ENCODE measurements at regions of chr18 and their contacts with region 1.

Region 1: DNA sequence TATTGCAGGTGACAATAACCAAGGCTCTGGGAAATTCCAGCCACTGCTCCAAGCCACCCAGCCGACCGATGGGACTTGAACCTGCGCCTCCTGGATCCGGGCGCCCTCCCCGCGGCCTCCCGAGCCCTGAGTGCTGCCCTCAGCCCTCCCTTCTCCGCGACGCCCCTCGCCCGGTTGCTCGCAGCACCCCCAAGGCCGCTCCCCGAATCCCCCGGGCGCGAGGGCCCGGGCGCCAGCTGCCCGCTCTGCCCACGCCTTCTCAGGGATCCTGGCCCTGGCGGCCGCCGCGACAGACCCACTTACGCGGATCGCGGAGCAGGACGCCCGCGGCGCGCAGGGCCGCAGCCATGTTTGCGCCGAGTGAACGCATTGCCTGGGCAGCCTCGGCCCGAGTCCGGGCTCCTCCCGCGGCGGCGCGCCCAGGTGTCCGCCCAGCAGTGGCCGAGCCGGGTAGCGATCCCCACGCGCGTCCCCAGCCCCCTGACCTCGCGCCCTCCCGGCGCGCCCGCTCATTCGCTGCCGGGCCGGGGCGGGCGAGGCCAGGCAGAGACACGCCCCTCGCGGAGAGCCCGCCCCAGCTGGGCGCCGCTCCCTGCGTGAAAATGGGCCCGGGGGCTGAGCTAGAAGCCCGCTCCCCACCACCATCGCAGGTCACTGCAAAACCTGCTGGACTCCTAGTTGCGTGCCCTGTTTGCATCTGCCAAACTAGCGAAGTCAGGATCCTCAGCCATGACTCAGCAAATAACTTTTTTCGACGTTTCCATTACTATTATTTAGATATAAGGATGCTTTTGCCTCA is at the start of gene FECH:
- DNase-seq: peak; percentile 73
- H3K4me3 Mint-ChIP-seq: peak within 1 kb of the TSS; percentile 83
- H3K27ac Mint-ChIP-seq: peak within 1 kb of the TSS; percentile 49
- H3K4me1 Mint-ChIP-seq: peaks cover 22% of the 10 kb centered on the region
- H3K27me3 Mint-ChIP-seq: no peaks in the 10 kb centered on the region
- total RNA-seq, gene FECH: 14.4 to 18.1 TPM

Region 2: GRCh38 chr18:57621246-57621604 is 34.8 kb after region 1 on chr18:
- CTCF ChIA-PET with region 1: interaction called, 3 read pairs
- POLR2A ChIA-PET with region 1: interaction called, 16 read pairs
- DNase-seq: no peak
- H3K4me3 Mint-ChIP-seq: peak overlapping the region; percentile 95
- H3K27ac Mint-ChIP-seq: peak overlapping the region; percentile 96
- H3K4me1 Mint-ChIP-seq: peaks cover 36% of the 10 kb centered on the region
- H3K27me3 Mint-ChIP-seq: no peaks in the 10 kb centered on the region

Measured in activated CD4-positive, alpha-beta memory T cell treated with anti-CD3 and anti-CD28 coated beads, Interleukin-2, amount 10 ng/mL, durations not matched to agents 7 days and 5 days (primary cell).